CD4-positive, alpha-beta memory T cell (primary cell): ENCODE measurements at regions of chr4 and their contacts with region 1.

Region 1: GRCh38 chr4:108466936-108467902 is 153.2 kb upstream of the RPL34 start:
- DNase-seq: peak in 4 of 5 donors; percentile 20 to 33 (median 21)
- H3K4me3 ChIP-seq: no peak overlapping the region
- H3K4me3 Mint-ChIP-seq: peak overlapping the region; percentile 57 to 92 (median 74)
- H3K27ac ChIP-seq: no peak overlapping the region
- H3K27ac Mint-ChIP-seq: peak overlapping the region; percentile 70 to 92 (median 79)
- H3K4me1 ChIP-seq: peaks cover 32% of the 10 kb centered on the region
- H3K4me1 Mint-ChIP-seq: peaks cover 21 to 40% (median 32%) of the 10 kb centered on the region in 4 donors
- H3K27me3 ChIP-seq: no peaks in the 10 kb centered on the region
- H3K27me3 Mint-ChIP-seq: no peaks in the 10 kb centered on the region

Region 2: DNA sequence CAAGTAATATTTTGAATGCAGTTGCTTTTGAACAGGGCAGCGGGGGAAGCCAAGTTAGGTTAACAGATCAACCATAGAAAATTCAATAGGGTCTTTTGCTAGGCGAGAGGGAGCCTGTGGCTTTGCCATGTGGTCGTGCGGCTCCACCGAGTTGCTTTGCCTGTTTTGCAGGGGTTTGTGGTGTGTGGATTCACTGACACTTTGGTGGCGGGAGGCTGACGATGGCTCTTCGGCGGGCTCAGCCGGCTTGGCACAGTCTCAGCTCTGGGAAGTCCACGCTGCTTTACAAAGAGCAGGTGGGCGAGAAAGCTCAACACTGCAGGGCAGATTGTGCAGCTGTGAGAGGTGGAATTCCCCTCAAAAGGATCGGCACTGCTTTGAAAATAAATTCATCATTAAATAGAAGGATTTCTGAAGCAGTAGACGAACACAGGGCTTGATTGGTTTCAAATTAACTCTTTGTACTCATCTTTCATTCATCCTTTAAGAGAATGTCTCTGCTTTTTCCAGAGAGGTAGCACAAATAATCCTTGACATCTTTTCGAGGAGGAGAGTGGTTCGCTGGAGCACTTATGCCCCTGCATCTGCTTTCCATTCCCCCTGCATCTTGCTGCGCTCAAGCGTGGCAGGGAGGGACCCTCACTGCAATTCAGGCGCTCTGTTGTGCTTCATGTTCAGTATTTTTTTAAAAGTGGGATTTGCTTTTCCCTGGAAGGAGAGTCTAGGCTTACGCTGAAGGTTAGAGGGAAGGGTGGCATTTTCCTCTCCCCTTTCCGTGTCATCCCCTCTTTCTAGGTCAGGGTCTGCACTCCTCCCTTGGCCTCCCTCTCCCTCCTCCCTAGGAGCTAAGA is 96.7 kb before region 1 on chr4:
- CTCF ChIA-PET with region 1: no interaction called
- POLR2A ChIA-PET with region 1: interaction called, 3 read pairs
- intact Hi-C with region 1: loop called (anchors 5 kb)
- DNase-seq: peak in 1 of 5 donors; percentile 25
- H3K4me3 ChIP-seq: no peak overlapping the region
- H3K4me3 Mint-ChIP-seq: peak overlapping the region; percentile 21 to 71 (median 63)
- H3K27ac ChIP-seq: no peak overlapping the region
- H3K27ac Mint-ChIP-seq: peak overlapping the region in 2 of 7 donors; percentile 3 to 6
- H3K4me1 ChIP-seq: peaks cover 25% of the 10 kb centered on the region
- H3K4me1 Mint-ChIP-seq: peaks cover 19 to 44% (median 29%) of the 10 kb centered on the region in 4 donors
- H3K27me3 ChIP-seq: no peaks in the 10 kb centered on the region
- H3K27me3 Mint-ChIP-seq: peaks cover 0 to 5% of the 10 kb centered on the region in 2 donors

Region 3: GRCh38 chr4:108433832-108434231 is 33.4 kb before region 1 on chr4:
- CTCF ChIA-PET with region 1: no interaction called
- POLR2A ChIA-PET with region 1: interaction called, 12 read pairs
- intact Hi-C with region 1: loop called (anchors 5 kb)
- DNase-seq: peak; percentile 54 to 71 (median 69)
- H3K4me3 ChIP-seq: peak overlapping the region; percentile 13 to 14
- H3K4me3 Mint-ChIP-seq: peak overlapping the region; percentile 28 to 77 (median 64)
- H3K27ac ChIP-seq: peak overlapping the region; percentile 13
- H3K27ac Mint-ChIP-seq: peak overlapping the region; percentile 61 to 86 (median 80)
- H3K4me1 ChIP-seq: peaks cover 42% of the 10 kb centered on the region
- H3K4me1 Mint-ChIP-seq: peaks cover 35 to 71% (median 43%) of the 10 kb centered on the region in 4 donors
- H3K27me3 ChIP-seq: no peaks in the 10 kb centered on the region
- H3K27me3 Mint-ChIP-seq: no peaks in the 10 kb centered on the region

Region 4: DNA sequence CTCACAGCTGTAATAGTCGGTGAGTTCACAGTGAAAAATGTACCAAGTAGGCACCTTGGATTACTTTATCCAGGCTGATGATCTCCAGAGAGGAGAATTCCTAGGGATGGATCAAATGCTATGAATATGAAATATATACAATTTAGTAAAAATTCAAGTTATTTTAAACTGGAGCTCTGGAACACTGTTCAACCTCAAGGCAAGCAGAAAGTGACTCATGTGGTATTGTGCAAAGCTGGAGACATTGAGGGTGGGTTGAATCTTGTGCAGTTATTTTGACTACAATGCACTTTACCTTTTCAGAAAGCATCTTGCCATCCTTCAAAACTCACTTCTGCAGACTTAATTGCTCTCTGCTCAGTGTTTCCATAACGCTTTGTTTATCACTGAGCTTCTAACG is 226.6 kb after region 1 on chr4:
- CTCF ChIA-PET with region 1: no interaction called
- POLR2A ChIA-PET with region 1: no interaction called
- intact Hi-C with region 1: no loop called
- DNase-seq: no peak
- H3K4me3 ChIP-seq: no peak overlapping the region
- H3K4me3 Mint-ChIP-seq: no peak overlapping the region
- H3K27ac ChIP-seq: no peak overlapping the region
- H3K27ac Mint-ChIP-seq: no peak overlapping the region
- H3K4me1 ChIP-seq: no peaks in the 10 kb centered on the region
- H3K4me1 Mint-ChIP-seq: no peaks in the 10 kb centered on the region
- H3K27me3 ChIP-seq: no peaks in the 10 kb centered on the region
- H3K27me3 Mint-ChIP-seq: no peaks in the 10 kb centered on the region

Region 5: GRCh38 chr4:108834835-108835384 is 367.7 kb after region 1 on chr4:
- CTCF ChIA-PET with region 1: no interaction called
- POLR2A ChIA-PET with region 1: no interaction called
- intact Hi-C with region 1: no loop called
- DNase-seq: peak in 1 of 5 donors; percentile 9
- H3K4me3 ChIP-seq: no peak overlapping the region
- H3K4me3 Mint-ChIP-seq: no peak overlapping the region
- H3K27ac ChIP-seq: no peak overlapping the region
- H3K27ac Mint-ChIP-seq: no peak overlapping the region
- H3K4me1 ChIP-seq: no peaks in the 10 kb centered on the region
- H3K4me1 Mint-ChIP-seq: no peaks in the 10 kb centered on the region
- H3K27me3 ChIP-seq: no peaks in the 10 kb centered on the region
- H3K27me3 Mint-ChIP-seq: peaks cover 2 to 7% of the 10 kb centered on the region in 2 donors

Region 6: DNA sequence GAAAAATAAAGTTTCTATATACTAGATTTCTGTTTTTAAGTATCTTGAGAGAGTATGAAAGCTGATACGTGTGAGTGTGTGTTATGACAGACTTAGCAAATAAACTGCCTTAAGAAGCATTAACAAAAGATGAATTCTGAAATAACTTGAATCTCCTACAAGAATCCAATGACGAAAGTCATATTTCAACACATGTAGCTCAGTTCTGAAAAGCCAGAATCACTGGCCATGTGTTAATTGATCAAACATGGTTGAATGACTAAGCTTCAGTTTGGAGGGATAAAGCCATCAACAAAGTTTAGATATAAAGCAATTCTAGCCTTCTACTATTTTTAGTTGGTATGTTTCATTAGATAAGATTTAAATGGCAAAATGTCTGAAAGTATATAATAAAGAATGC is 384.1 kb after region 1 on chr4:
- CTCF ChIA-PET with region 1: no interaction called
- POLR2A ChIA-PET with region 1: no interaction called
- intact Hi-C with region 1: no loop called
- DNase-seq: no peak
- H3K4me3 ChIP-seq: no peak overlapping the region
- H3K4me3 Mint-ChIP-seq: no peak overlapping the region
- H3K27ac ChIP-seq: no peak overlapping the region
- H3K27ac Mint-ChIP-seq: no peak overlapping the region
- H3K4me1 ChIP-seq: peaks cover 23% of the 10 kb centered on the region
- H3K4me1 Mint-ChIP-seq: peaks cover 6 to 31% (median 13%) of the 10 kb centered on the region in 4 donors
- H3K27me3 ChIP-seq: no peaks in the 10 kb centered on the region
- H3K27me3 Mint-ChIP-seq: peaks cover 0 to 5% of the 10 kb centered on the region in 2 donors